Activated CD4-positive, alpha-beta memory T cell treated with anti-CD3 and anti-CD28 coated beads, Interleukin-2, amount 10 ng/mL, durations not matched to agents 7 days and 5 days (primary cell): ENCODE measurements at regions of chr10 and their contacts with region 1.

Region 1: DNA sequence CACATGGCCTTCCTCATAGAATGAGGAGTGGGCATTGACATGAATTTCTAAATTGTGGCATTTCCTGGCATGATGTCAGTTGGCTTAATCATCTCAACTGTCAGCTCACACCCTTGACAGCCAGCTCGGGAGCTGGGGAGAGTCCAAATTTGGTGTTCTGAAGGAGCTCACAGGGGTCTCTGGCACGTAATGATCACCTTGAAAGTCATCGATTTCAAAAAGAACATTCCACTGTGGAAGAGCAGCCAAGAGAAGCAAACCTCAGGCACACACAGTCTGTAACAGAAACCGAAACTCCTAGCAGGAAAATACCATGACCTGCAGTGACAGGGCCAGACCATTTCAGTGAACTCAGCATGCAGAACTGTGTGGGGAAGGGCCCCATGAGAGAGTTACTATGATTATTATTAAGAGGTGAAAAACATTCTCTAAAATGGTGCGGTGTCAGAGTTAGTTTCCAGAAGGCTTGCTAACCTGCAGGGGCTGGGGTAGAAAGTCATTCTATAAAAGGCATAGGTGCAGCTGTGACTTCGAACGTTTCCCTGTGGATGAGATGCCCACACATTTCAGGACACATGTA is 26.4 kb upstream of the KLF6 start:
- DNase-seq: peak; percentile 71
- H3K4me3 Mint-ChIP-seq: peak overlapping the region; percentile 68
- H3K27ac Mint-ChIP-seq: no peak overlapping the region
- H3K4me1 Mint-ChIP-seq: peaks cover 84% of the 10 kb centered on the region
- H3K27me3 Mint-ChIP-seq: no peaks in the 10 kb centered on the region

Region 2: DNA sequence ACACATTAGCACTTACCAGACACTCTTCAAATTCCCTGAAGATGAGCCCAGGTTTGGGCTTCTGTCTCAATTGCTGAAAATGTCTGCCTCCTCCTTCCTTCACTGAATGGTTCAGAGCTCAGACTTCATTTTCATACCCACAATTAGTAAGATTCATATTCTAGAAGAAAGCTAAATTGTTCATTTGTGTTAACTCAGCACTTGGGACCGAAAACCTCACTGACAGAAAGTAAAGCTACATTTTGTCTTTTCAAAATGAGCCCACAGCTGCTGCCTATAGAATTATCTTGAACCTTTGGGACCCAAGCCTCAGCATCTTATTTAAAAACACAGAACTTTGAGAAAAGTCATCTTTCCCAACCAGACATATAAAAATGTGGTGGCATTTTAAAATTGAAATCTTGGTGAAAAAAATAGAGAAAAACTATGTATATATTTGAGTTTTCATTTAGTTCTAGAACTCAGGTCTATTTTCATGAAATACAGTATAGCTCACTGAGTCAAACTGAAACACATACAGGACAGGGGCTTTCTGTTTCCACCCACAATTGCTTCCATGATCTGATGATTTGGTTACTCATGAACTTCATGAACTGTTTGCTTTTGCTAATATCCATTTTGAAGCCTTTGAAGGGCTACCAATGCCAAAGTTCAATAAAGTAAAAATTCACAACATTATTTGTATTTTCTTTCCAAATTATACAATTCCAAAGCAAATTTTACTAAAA is 863.1 kb before region 1 on chr10:
- CTCF ChIA-PET with region 1: no interaction called
- POLR2A ChIA-PET with region 1: no interaction called
- DNase-seq: no peak
- H3K4me3 Mint-ChIP-seq: no peak overlapping the region
- H3K27ac Mint-ChIP-seq: no peak overlapping the region
- H3K4me1 Mint-ChIP-seq: peaks cover 39% of the 10 kb centered on the region
- H3K27me3 Mint-ChIP-seq: peaks cover 33% of the 10 kb centered on the region

Region 3: DNA sequence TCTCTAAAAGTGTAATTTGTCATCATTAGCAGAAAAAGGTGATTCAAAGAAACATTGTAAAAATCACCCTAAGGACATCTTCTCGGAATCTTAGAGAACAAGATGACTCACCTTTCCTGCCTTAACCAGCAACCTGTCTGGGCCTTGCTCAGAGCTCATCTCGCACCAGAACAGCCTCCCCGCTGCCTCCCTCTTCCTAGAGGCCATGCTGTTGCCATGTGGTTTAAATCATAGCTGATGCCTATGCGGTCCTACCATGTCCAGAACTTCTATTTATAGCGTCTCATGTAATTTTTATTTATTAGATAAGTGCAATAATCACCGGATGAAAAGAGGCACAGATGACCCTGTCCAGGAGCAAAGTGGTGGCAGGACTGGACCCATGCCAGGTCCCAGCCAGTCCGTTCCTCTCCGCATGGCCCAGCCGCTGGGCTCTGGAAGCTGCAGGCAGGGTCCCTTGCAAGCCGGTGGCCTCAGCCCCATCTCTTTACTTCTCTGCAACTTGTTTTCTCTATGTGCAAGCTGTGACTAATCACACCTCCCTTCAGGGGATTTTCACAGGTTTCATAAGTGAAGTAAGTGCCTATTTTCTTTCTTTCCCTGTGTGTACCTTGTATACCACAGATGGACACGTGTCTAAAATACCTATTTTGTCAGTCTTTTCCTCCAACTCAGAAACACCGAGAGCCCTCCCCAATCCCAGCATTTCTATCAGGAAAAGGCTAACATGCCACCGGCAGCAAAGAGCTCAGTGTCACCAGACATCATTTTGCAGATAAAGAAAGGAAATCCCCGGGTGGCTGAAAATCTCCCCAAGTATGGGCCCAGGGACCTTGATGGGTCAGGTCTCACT is 53.5 kb before region 1 on chr10:
- CTCF ChIA-PET with region 1: interaction called, 3 read pairs
- POLR2A ChIA-PET with region 1: interaction called, 132 read pairs
- DNase-seq: peak; percentile 80
- H3K4me3 Mint-ChIP-seq: peak overlapping the region; percentile 46
- H3K27ac Mint-ChIP-seq: peak overlapping the region; percentile 97
- H3K4me1 Mint-ChIP-seq: peaks cover 83% of the 10 kb centered on the region
- H3K27me3 Mint-ChIP-seq: no peaks in the 10 kb centered on the region

Region 4: DNA sequence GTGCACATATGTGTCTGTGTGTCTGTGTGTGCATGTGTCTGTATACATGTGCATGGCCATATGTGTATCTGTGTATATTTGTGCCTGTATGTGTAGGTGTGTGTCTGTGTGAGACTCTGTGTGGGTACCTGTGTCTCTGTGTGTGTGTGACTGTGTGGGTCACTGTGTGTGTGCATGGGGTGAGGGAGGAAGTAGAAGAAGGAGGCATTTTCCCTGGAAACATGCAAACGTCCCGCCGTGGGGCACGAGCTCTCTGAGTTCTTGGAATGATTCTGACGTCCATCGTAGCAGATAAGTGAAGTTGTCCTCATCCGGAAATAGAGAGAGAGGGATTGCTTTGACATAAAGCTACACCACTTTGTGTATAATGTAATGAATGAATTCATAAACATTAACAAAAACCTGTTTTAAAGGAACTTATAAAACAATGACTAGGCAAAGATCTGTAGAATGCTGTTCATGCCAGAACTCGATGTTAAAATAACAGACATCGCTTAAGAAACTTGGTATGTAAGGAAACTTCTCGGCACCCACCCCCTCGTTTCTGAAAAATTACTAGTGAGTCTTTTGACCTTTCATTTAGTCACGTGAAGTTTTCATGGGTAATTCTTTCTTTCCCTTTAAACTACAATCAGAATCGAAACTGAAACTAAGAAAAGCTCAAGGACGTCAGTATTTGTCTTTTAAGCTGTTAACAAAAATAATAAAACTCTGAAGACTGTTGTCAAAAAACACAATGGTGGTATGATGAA is 17.2 kb after region 1 on chr10:
- CTCF ChIA-PET with region 1: interaction called, 7 read pairs
- POLR2A ChIA-PET with region 1: interaction called, 144 read pairs
- DNase-seq: no peak
- H3K4me3 Mint-ChIP-seq: peak overlapping the region; percentile 73
- H3K27ac Mint-ChIP-seq: peak overlapping the region; percentile 88
- H3K4me1 Mint-ChIP-seq: peaks cover 45% of the 10 kb centered on the region
- H3K27me3 Mint-ChIP-seq: no peaks in the 10 kb centered on the region

Region 5: DNA sequence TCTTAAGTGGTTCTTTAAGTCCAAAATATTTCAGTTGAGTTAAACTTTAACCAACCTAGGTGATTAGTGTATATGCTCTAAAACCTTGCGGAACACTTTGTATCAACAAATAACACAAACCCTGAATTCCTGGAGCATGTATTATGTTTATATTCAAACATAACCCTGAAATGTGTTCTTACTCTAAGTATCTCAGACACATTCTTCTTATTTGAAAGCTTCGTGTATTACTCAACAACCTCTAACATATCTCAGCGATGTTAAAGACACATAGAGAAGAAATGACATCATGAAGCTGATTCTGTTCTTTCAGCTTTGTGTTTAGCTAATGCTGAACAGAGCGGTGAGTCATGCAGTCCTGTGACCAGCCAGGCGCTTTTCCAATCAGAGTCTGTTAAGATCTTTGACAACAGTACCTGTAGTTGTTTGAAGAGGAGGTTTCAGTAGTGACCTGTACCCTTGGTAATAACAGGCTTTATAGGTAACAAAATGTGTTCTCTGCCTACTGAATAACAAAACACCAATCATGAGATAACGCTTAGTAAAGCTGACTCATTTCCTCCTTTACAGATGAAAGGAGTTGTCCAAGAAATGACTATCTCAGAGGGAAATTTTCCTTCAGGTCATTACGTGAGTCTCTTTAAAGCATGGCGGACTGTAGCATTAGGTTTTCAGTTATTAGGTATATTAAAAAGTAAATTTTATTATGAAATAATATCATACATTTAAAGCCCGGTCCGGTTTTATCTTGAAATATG is 40.9 kb after region 1 on chr10:
- CTCF ChIA-PET with region 1: interaction called, 3 read pairs
- POLR2A ChIA-PET with region 1: interaction called, 40 read pairs
- DNase-seq: peak; percentile 76
- H3K4me3 Mint-ChIP-seq: peak overlapping the region; percentile 15
- H3K27ac Mint-ChIP-seq: peak overlapping the region; percentile 75
- H3K4me1 Mint-ChIP-seq: peaks cover 36% of the 10 kb centered on the region
- H3K27me3 Mint-ChIP-seq: no peaks in the 10 kb centered on the region

Region 6: GRCh38 chr10:3873728-3874461 is 62.5 kb after region 1 on chr10:
- CTCF ChIA-PET with region 1: no interaction called
- POLR2A ChIA-PET with region 1: interaction called, 43 read pairs
- DNase-seq: no peak
- H3K4me3 Mint-ChIP-seq: no peak overlapping the region
- H3K27ac Mint-ChIP-seq: peak overlapping the region; percentile 33
- H3K4me1 Mint-ChIP-seq: peaks cover 61% of the 10 kb centered on the region
- H3K27me3 Mint-ChIP-seq: no peaks in the 10 kb centered on the region

Region 7: DNA sequence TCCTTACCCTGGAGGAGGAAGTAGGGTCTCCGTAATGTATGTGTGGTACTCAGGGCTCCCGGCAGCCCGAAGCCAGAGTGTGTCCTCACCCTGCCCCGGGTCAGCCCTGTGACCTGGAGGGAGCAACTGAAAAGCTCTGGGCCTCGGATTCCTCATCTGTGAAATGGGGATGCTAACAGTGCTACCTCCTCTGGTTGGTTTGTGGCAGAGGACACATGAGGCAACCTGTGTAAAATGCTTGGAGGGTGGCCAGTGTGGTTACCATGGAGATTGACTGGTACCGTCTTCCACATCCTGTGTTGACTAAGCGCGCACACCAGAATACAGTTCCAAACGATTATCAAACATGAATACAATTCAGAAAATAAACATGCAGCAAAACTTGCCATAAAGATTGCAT is 137.5 kb after region 1 on chr10:
- CTCF ChIA-PET with region 1: no interaction called
- POLR2A ChIA-PET with region 1: interaction called, 45 read pairs
- DNase-seq: peak; percentile 85
- H3K4me3 Mint-ChIP-seq: peak overlapping the region; percentile 70
- H3K27ac Mint-ChIP-seq: peak overlapping the region; percentile 90
- H3K4me1 Mint-ChIP-seq: peaks cover 73% of the 10 kb centered on the region
- H3K27me3 Mint-ChIP-seq: no peaks in the 10 kb centered on the region

Region 8: DNA sequence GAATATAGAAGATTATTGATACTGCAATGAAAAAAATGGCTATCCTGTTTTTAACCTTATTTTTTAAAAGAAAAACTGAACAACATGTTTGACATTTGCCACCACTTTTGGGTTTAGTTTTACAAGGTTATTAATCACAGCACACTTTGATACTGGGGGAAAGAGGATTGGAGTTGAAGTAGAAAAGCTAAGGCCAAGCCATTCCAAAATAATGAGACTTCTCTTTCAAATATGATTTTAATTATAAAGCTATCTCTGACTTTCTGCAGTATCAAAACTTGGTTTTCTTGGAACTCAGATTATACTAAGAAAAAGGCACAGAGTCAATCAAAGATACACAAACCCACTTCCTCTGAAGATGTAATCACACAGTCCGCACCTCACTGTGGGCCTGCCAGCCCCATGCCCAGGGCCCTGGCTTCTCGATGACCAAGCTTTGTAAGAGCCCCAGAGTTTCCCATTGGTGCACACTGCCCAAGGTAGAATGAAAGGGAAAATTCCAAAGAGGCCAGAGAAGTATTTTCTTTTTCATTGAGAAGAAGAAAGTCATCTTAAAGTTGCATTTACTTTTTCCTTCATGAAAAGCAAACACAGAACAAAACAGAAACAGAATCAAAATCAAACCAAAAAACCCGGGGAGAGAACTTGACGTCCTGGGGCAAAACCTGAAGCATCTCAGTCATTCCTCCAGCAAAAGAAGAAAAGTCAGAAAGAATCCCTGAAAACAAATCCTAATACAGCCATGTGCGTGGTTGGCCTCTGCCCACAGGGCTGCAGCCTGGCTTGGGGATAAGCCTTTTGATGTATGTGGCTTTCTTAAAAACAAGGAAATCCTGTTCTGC is 161.3 kb after region 1 on chr10:
- CTCF ChIA-PET with region 1: interaction called, 4 read pairs
- POLR2A ChIA-PET with region 1: interaction called, 63 read pairs
- DNase-seq: peak; percentile 68
- H3K4me3 Mint-ChIP-seq: peak overlapping the region; percentile 62
- H3K27ac Mint-ChIP-seq: peak overlapping the region; percentile 98
- H3K4me1 Mint-ChIP-seq: peaks cover 49% of the 10 kb centered on the region
- H3K27me3 Mint-ChIP-seq: no peaks in the 10 kb centered on the region